GM10248 (cell line): ENCODE measurements at regions of chr2 and their contacts with region 1.

Region 1: DNA sequence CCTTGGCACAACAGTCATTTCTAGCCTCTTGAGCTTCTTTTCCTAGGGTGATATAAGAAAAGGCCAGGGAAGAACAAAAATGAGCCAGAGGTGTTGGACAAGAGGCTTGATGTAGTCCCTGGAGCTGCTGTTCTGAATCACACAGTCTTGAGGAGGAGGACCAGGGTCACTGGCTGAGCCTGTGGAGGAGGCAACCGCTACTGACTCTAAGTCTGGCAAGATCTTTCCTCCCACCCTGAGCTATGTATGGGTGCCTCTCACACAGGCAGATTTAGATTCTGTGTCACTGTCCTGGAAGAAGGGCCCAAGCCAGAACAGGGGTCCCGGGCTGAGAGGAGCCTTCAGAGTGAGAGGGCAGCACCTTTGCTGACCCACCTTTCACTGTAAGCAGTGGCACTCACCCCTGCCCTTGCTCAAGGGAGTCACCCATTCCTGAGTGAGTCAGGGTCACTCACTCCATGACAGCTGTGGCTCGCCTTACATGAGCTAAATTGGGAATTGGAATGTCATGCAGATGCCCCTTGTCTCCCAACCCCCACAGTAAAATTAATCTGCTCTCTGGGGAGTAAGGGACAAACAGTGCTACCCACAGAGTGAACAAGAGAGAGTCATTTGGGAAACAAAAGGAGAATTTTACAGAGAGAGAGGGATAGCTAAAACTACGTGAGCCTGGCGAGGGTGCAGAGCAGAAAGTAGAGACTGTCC is at the start of gene TRIM54:
- DNase-seq: no peak
- CTCF ChIP-seq: no peak

Region 2: DNA sequence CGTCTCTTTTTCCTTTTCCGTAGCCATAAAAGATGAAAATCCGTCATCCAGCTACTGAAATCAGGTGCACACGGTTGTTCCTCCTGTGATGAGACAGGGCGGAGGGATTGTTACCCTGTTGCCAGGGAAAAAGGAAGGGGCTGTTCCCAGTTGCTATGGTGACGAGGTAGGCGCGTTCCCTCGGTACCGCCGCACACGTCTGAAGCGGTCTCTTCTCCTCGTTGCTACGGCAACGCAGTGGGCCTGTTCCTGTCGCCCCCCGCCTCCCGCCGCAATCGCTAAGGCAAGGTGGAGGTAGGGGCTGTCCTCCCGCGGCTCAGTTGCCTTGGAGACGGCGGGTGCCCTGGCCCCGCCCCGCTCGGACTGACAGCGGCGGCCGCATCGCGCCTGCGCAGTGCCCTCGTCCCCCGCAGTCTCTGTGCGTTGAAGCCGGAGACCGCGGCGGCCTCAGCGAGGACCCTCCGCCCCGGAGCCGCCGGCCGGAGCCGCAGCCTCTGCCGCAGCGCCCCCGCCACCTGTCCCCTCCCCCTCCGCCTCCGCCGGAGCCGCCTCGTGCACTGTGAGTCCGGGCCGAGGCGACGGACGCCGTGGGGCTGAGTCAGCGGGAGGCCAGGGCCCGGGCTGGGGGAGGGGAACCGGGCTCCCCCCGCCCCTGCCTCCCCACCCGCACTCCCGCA is 311.6 kb before region 1 on chr2 and contains the start of gene MAPRE3:
- CTCF ChIA-PET with region 1: interaction called, 11 read pairs
- POLR2A ChIA-PET with region 1: no interaction called
- DNase-seq: peak; percentile 95
- CTCF ChIP-seq: no peak

Region 3: DNA sequence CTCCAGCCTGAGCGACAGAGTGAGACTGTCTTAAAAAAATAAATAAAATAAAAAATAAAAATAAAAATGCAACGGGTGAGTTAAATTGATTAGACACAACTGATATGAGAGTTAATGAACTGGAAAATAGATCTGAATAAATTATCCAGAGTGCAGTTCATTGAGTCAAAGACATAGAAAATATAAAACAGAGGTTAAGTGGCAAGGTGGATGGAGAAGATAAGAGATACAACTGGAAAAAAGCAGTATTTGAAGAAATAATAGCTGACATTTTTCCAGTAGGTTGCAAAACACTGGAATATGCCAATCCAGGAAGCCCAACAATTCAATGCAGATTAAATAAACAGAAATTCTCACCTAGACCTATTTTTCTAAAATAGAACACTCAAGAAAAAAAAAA is 173.8 kb before region 1 on chr2:
- CTCF ChIA-PET with region 1: interaction called, 136 read pairs
- POLR2A ChIA-PET with region 1: no interaction called
- DNase-seq: no peak
- CTCF ChIP-seq: no peak

Region 4: GRCh38 chr2:27241761-27242613 is 40.0 kb before region 1 on chr2:
- CTCF ChIA-PET with region 1: interaction called, 14 read pairs
- POLR2A ChIA-PET with region 1: no interaction called
- DNase-seq: no peak
- CTCF ChIP-seq: no peak

Region 5: GRCh38 chr2:27255660-27256059 is 26.3 kb before region 1 on chr2:
- CTCF ChIA-PET with region 1: interaction called, 77 read pairs
- POLR2A ChIA-PET with region 1: no interaction called
- DNase-seq: no peak
- CTCF ChIP-seq: no peak

Region 6: GRCh38 chr2:27271631-27272340 is 10.2 kb before region 1 on chr2:
- CTCF ChIA-PET with region 1: interaction called, 99 read pairs
- POLR2A ChIA-PET with region 1: no interaction called
- DNase-seq: no peak
- CTCF ChIP-seq: no peak

Region 7: DNA sequence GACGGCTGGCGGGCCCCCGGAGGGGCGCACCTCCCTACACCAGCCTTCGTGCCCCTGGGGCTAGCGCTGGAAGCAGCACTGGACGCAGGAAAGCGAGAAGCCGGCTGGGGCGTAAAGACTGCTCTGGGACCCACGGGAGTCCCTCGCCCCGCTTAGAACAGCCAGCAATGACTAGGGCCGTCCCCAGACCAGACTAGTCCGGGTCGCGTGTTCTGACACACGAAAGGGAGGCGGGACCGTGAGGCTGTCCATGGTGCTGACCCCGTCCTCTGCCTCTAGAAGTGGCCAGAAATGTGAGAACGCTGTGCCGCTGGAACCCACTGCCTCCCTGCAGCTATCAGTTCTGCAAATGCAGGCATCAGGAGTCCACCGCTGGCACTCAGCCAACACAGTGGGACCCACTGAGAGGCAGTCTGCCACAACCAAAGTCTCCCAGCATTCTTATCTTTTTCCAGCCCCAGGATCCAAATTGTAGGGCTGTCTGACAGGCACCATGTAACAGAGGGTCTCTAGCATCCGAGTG is 26.4 kb after region 1 on chr2 and contains the start of gene UCN:
- CTCF ChIA-PET with region 1: interaction called, 138 read pairs
- POLR2A ChIA-PET with region 1: no interaction called
- DNase-seq: no peak
- CTCF ChIP-seq: no peak

Region 8: DNA sequence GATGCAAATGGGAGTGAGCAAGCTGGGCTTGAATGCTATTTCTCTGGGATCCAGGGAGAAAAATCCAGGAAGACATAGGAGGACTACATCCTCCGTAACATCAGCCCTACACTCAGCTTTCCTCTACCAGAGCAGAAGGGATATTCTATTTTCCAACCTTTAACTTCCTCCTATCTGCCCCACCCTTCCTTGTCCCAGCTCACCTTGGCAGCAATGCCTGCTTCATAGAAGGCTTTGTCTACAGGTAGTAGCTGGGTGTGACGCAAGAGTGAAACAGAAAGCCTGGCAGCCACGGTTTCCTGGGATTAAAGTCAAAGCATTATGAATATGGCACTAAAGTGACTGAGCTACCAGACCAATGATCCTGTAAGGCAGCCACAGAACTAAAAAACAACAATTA is 164.1 kb after region 1 on chr2:
- CTCF ChIA-PET with region 1: no interaction called
- POLR2A ChIA-PET with region 1: no interaction called
- DNase-seq: no peak
- CTCF ChIP-seq: no peak

Region 9: GRCh38 chr2:27496357-27497287 is 214.6 kb after region 1 on chr2 and contains the start of gene GCKR:
- CTCF ChIA-PET with region 1: no interaction called
- POLR2A ChIA-PET with region 1: no interaction called
- DNase-seq: no peak
- CTCF ChIP-seq: no peak

Region 10: GRCh38 chr2:27545348-27546141 is 263.5 kb after region 1 on chr2:
- CTCF ChIA-PET with region 1: no interaction called
- POLR2A ChIA-PET with region 1: no interaction called
- DNase-seq: no peak
- CTCF ChIP-seq: no peak